Activated CD4-positive, alpha-beta T cell treated with anti-CD3 and anti-CD28 coated beads, Interleukin-2, amount 10 ng/mL, durations not matched to agents 7 days and 5 days (primary cell): ENCODE measurements at regions of chr16 and their contacts with region 1.

Region 1: GRCh38 chr16:10509534-10510025 is 70.8 kb downstream of the EMP2 start:
- DNase-seq: peak; percentile 81
- H3K4me3 Mint-ChIP-seq: no peak overlapping the region
- H3K27ac Mint-ChIP-seq: no peak overlapping the region
- H3K4me1 Mint-ChIP-seq: peaks cover 6% of the 10 kb centered on the region
- H3K27me3 Mint-ChIP-seq: peaks cover 2% of the 10 kb centered on the region

Region 2: GRCh38 chr16:10314811-10315210 is 194.8 kb before region 1 on chr16:
- CTCF ChIA-PET with region 1: interaction called, 14 read pairs
- POLR2A ChIA-PET with region 1: interaction called, 3 read pairs
- DNase-seq: peak; percentile 13
- H3K4me3 Mint-ChIP-seq: no peak overlapping the region
- H3K27ac Mint-ChIP-seq: no peak overlapping the region
- H3K4me1 Mint-ChIP-seq: peaks cover 12% of the 10 kb centered on the region
- H3K27me3 Mint-ChIP-seq: no peaks in the 10 kb centered on the region

Region 3: DNA sequence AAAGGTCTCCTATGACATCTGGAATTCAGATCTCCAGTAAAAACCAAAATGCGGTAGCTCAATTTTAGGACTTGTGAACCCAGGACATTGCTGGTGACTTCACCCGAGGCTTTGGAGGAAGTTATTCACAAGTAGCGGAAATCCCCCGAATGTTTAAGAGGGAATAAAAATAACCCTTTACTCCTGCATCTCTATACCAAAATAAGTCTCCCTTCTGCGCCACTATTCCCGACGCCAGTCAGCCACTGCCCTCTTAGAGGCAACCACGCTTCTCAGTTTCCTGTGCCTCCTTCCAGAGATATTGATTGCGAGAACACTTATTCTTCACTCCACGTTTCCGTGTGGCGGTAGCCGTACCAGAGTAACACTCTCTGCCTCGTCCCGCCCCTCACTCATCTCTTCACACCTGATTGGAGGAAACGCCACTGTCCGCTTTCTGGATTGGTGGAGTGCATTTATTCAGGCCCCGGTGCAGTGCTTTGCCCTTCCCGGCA is 43.5 kb after region 1 on chr16:
- CTCF ChIA-PET with region 1: no interaction called
- POLR2A ChIA-PET with region 1: no interaction called
- DNase-seq: peak; percentile 48
- H3K4me3 Mint-ChIP-seq: peak overlapping the region; percentile 63
- H3K27ac Mint-ChIP-seq: no peak overlapping the region
- H3K4me1 Mint-ChIP-seq: peaks cover 6% of the 10 kb centered on the region
- H3K27me3 Mint-ChIP-seq: peaks cover 21% of the 10 kb centered on the region

Region 4: GRCh38 chr16:10737068-10737625 is 227.6 kb after region 1 on chr16:
- CTCF ChIA-PET with region 1: interaction called, 18 read pairs
- POLR2A ChIA-PET with region 1: no interaction called
- DNase-seq: peak; percentile 80
- H3K4me3 Mint-ChIP-seq: peak overlapping the region; percentile 30
- H3K27ac Mint-ChIP-seq: peak overlapping the region; percentile 79
- H3K4me1 Mint-ChIP-seq: peaks cover 40% of the 10 kb centered on the region
- H3K27me3 Mint-ChIP-seq: no peaks in the 10 kb centered on the region